Dendritic cell treated with granulocyte-macrophage colony-stimulating factor and Interleukin-4, amounts not matched to agents 40 ng/mL and 50 ng/mL, for 4 days (primary cell): ENCODE measurements at regions of chr7 and their contacts with region 1.

Region 1: DNA sequence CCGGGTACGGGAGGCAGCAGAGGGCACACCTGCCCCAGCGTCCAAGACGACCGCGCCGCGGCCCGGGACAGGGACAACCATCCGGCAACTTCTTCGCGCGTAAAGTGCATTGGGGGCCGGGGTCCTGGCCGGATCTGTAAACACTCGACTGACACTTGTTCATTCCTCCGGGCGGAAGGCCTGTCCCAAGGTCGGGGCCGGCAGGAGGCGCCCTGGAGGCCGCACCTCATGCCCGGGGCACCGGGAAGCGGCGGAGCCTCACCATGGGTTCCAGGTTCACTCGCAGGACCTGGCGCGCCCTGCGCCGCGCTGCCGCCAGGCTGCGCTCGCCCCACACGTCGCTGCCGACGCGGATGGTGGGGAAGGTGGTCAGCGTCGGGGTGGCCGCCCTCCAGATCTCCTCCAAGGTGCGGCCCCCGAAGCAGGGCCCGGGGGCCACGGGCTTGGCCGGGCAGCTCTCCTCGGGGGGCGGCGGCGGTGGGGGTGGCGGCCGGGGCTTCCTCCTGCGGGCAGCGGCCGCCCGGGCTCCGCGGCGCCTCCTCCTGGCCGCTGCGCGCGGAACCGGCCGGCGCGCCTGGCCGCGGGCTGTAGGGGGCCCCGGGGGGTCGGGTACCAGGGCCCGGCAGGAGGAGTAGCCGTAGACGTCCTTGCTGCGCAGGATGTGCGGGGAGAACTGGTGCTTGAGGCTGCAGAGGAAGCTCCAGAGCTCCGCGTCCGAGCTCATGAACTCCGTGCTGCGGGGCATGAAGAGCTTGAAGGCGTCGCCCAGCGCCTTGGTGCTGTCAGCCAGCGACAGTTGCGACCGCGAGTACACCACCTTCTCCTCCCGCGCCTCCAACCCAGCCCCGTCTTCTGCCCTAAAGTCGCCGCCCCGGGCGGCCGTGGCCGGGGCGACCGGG is 746 bp downstream of the CCDC71L start:
- H3K4me3 Mint-ChIP-seq: peak overlapping the region; percentile 82
- H3K27ac Mint-ChIP-seq: peak overlapping the region; percentile 86
- H3K4me1 Mint-ChIP-seq: peaks cover 27% of the 10 kb centered on the region
- H3K27me3 Mint-ChIP-seq: no peaks in the 10 kb centered on the region

Region 2: DNA sequence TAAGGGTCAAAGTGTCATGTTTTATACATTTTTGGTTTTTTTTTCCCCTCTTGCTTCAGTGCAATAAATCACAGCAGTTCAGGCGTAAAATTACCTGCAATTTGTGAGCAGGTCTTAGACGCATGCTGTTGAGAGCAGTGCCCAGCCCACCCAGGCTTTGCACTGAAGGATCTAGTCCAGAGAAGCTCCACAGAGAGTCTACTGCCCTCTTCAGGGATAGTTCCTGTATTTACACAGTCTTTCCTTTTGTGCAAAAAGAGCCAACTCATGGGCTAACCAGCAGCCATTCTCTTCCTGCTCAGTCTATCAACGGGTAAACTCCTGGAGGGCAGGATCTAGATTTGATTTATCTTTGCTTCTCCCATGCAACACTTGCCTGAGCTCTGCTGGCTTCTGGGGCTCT is 293.2 kb before region 1 on chr7:
- intact Hi-C with region 1: no loop called
- H3K4me3 Mint-ChIP-seq: no peak overlapping the region
- H3K27ac Mint-ChIP-seq: peak overlapping the region; percentile 33
- H3K4me1 Mint-ChIP-seq: peaks cover 34% of the 10 kb centered on the region
- H3K27me3 Mint-ChIP-seq: no peaks in the 10 kb centered on the region

Region 3: GRCh38 chr7:106542550-106543220 is 117.5 kb before region 1 on chr7:
- intact Hi-C with region 1: loop called (anchors 2 kb)
- H3K4me3 Mint-ChIP-seq: no peak overlapping the region
- H3K27ac Mint-ChIP-seq: peak overlapping the region; percentile 30
- H3K4me1 Mint-ChIP-seq: peaks cover 6% of the 10 kb centered on the region
- H3K27me3 Mint-ChIP-seq: peaks cover 5% of the 10 kb centered on the region

Region 4: GRCh38 chr7:106717955-106718871 is 58.0 kb after region 1 on chr7:
- intact Hi-C with region 1: loop called (anchors 5 kb)
- H3K4me3 Mint-ChIP-seq: no peak overlapping the region
- H3K27ac Mint-ChIP-seq: no peak overlapping the region
- H3K4me1 Mint-ChIP-seq: peaks cover 44% of the 10 kb centered on the region
- H3K27me3 Mint-ChIP-seq: peaks cover 2% of the 10 kb centered on the region

Region 5: DNA sequence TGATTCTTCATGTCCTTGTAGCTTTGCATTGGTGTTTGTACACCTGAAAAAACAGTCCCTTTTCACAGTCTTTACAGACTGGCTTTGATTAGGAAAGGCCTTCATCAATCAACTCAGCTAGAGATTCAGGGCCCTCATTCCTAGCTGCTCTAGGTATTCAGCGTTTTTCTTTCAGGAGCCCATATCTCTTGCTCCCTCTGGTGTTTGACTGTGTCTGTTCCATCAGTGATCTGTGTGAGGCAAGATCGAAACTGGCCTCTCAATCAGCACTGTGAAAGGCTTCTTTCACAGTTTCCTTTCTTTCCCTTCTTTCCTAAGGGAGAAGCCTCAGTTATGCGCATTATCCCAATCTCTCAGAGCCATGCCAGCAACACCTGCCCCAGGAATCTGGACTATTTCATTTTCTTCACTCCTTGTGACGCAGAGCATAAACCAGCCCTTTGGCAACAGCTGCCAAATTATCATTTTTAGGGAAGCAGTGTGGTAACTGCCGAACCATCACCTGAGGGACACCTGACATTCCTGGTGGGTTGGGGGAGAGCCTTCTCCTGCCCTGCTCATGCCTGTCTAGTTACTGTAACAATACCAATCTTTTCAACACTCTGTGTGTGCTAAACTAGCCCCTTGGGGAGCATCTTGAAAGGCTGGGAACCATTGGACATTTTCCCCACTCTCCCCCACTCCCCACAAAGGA is 76.4 kb after region 1 on chr7:
- intact Hi-C with region 1: loop called (anchors 1 kb)
- H3K4me3 Mint-ChIP-seq: peak overlapping the region; percentile 18
- H3K27ac Mint-ChIP-seq: no peak overlapping the region
- H3K4me1 Mint-ChIP-seq: peaks cover 23% of the 10 kb centered on the region
- H3K27me3 Mint-ChIP-seq: peaks cover 7% of the 10 kb centered on the region

Region 6: GRCh38 chr7:106870983-106871410 is 210.8 kb after region 1 on chr7:
- intact Hi-C with region 1: loop called (anchors 10 kb)
- H3K4me3 Mint-ChIP-seq: peak overlapping the region; percentile 30
- H3K27ac Mint-ChIP-seq: peak overlapping the region; percentile 81
- H3K4me1 Mint-ChIP-seq: peaks cover 71% of the 10 kb centered on the region
- H3K27me3 Mint-ChIP-seq: no peaks in the 10 kb centered on the region

Region 7: DNA sequence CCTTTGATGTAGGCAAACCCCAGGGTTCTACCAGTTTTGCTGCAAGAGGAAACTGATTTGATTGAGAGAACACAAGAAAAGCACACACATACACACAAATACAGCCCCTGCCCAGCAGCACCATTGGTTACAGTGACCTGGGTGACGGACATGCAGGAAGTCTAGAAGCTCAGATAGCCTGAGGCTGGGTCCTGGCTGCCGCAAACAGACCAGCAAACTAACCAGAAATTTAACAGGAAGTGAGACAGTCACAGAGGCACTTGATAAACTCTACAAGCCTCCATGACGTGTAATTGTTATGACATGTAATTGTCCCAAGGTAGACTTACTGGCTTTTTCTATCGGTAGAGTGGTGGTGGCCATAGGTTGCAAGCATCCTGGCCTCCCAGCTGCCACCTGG is 443.2 kb after region 1 on chr7:
- intact Hi-C with region 1: no loop called
- H3K4me3 Mint-ChIP-seq: peak overlapping the region; percentile 40
- H3K27ac Mint-ChIP-seq: peak overlapping the region; percentile 76
- H3K4me1 Mint-ChIP-seq: peaks cover 38% of the 10 kb centered on the region
- H3K27me3 Mint-ChIP-seq: no peaks in the 10 kb centered on the region

Region 8: GRCh38 chr7:108114117-108114841 is 1454.1 kb after region 1 on chr7:
- intact Hi-C with region 1: no loop called
- H3K4me3 Mint-ChIP-seq: no peak overlapping the region
- H3K27ac Mint-ChIP-seq: no peak overlapping the region
- H3K4me1 Mint-ChIP-seq: no peaks in the 10 kb centered on the region
- H3K27me3 Mint-ChIP-seq: no peaks in the 10 kb centered on the region